HEK293 (cell line): ENCODE measurements at regions of chr11 and their contacts with region 1.

Region 1: DNA sequence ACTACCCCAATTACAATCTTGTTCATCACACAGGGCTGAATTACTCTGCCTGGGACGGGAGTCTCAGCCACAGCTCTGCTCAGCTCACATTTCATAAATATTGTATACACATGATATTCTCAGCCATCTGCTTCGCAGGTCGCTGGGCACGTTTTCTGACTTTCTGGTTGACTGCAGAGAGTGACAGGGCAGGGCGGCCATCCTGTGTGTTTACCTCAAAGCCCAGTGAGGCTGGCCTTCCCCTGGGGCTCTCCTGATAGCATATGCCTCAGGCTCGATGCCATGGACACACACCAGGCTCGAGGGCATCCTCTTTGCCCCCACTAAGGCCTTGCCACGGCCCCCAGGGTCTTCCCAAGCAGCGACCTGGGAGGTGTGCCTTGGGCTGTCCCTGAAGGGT is 345.0 kb downstream of the CADM1 start:
- H3K4me3 ChIP-seq: no peak overlapping the region
- H3K27ac ChIP-seq: no peak overlapping the region
- H3K4me1 ChIP-seq: no peaks in the 10 kb centered on the region; the same call in none of the 2 replicates
- CTCF ChIP-seq: no peak

Region 2: DNA sequence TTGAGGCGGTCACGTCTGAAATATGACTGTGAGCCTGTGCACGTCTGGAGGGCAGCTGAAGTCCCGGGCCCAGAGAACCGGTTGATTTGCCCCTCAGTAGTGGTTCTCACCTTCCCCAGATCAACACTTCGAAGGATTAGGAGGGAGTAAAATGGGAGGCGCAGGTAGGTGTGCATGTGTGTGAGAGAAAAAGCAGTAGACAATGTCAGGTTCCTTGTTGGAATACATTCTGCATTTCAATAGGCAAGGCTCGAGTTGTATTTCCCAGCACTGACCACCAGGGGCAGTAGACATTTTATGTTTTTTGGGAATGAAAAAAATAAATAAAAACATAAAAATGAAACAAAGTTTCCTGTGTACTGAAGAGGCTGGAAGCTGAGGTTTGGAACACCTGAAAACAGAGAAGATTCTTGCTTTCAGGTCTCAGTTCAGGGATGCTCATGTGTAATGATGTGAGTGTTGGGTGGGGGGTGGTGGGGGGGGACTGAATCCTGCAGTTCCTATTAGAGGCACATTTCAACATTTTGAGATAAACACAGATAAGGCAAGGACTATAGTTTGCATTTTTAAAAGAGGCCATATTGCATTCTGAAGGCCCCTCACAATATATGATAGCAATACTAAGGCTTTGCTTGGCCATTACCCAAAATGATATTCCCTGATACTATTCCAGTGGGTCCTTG is 11.1 kb after region 1 on chr11:
- CTCF ChIA-PET with region 1: interaction called, 10 read pairs
- POLR2A ChIA-PET with region 1: no interaction called
- H3K4me3 ChIP-seq: no peak overlapping the region
- H3K27ac ChIP-seq: no peak overlapping the region
- H3K4me1 ChIP-seq: 0 out of 2 replicates have a peak, but pooled peaks cover 5% of the 10 kb centered on the region
- CTCF ChIP-seq: no peak; the same call in 1 of the 2 replicates

Region 3: DNA sequence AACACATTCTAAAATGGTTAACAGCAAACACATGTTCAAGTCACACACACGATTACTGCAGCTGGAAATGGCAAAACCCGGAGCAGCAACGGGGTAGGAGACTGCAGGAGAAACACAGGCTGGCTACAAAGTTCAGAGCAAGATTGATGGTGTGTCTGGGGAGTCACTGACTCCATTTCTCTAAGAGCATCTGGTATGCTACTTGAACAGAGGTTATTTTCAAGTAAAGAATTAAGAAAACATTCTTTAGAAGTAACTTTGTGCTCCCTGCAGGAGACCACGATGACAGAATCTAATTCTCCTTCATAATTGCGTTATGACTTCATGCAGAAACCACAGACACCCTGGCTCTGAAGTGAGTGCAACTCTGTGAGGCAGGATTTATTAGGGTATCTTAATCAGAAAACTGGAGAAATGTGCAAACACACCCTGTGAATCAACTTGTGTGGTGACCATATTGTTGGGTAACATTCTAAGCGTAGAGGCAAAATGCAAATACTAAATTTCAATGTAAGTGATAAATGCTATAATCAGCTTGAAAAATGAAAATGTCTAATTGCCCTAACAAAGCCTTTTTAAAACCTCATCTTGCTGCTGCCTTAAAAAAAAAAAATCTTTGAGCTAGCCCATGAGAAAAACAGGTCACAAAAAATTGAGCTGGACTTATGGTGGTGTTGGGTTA is 42.0 kb after region 1 on chr11:
- CTCF ChIA-PET with region 1: no interaction called
- POLR2A ChIA-PET with region 1: no interaction called
- H3K4me3 ChIP-seq: no peak overlapping the region
- H3K27ac ChIP-seq: no peak overlapping the region
- H3K4me1 ChIP-seq: peaks cover 7% of the 10 kb centered on the region
- CTCF ChIP-seq: no peak

Region 4: DNA sequence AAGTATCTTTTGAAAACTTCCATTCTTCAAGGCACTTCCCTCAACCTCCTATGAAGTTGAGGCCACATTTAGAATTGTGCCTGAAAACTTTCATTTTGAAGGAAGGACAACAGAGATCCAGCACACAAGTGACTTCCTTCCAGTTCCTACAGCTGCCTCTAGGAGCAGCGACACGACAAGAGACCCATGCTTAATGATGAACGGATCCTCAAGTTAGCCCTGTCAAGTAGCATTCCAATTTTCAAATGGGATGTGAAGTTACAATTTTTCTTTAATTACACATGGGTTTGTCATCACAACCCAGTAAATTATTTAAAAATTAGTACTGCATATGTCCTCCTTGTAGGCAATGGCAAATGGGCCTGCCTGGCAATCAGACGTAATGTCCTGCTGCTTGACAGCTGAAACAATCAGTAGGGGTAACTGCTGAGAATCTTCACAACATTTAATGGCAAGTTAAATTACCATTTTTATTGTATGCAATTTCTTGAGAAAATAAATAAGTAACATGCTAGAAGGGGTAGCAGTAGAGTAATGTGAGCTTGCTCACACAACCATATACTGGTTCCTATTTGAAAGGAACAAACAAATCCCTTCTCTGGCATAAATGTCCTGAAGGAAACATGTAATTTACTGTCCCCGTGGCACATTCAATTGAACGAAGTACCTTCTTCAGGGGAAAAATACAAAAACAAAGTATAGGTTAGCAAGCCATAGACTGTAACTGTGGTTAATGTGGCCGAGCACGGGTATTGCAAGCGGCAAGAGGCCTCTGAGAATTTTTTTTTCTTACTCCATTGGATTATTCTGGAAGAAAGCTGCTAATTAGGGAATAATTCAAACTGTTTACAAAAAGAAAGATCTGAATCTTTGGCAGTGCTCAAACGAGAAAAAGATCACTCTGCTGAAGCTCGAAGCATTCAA is 56.7 kb after region 1 on chr11:
- CTCF ChIA-PET with region 1: no interaction called
- POLR2A ChIA-PET with region 1: no interaction called
- H3K4me3 ChIP-seq: no peak overlapping the region
- H3K27ac ChIP-seq: no peak overlapping the region
- H3K4me1 ChIP-seq: 0 out of 2 replicates have a peak, but pooled peaks cover 3% of the 10 kb centered on the region
- CTCF ChIP-seq: no peak